CD8-positive, alpha-beta T cell (primary cell): ENCODE measurements at regions of chr2 and their contacts with region 1.

Region 1: DNA sequence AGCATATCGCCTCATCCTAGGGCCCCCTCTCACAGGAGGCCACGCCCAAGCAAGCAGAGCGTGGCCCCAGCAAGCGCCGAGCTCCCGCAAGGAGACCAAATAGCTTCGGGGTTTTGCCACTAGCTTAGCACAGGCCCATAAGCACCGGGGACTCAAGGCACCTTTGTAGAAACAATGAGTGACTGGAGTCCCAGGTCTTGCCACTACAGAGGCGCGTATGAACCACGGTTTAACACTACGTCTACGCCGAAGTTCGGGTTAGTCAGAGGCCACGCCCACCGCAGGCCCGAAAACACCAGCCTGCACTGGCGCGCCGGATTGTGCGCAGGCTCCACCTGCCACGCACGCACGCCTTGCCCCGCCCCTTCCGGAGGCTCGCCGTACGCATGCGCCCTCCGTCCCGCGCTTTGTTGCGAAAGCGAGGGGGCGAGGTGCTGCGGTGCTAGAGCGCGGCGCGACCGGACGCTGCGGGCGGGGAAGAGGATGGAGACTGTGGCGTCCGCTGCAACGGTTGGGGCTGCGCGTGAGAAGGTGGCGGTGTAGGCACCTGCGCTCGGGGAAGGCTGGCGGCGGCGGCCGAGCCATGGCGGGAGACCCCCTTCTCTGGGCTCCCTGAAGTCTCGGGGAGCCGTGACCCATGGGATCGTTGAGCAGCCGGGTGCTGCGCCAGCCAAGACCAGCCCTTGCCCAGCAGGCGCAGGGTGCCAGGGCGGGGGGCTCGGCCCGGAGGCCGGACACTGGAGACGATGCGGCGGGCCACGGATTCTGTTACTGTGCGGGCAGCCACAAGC is at the start of gene GMCL1:
- DNase-seq: peak; percentile 96 to 100 (median 99)
- ATAC-seq: peak; percentile 94
- H3K4me3 ChIP-seq: peak within 1 kb of the TSS; percentile 70 to 75
- H3K4me3 Mint-ChIP-seq: peak within 1 kb of the TSS; percentile 96
- H3K27ac ChIP-seq: peak within 1 kb of the TSS; percentile 89 to 95
- H3K27ac Mint-ChIP-seq: peak within 1 kb of the TSS; percentile 96
- H3K4me1 ChIP-seq: peaks cover 36% of the 10 kb centered on the region
- H3K4me1 Mint-ChIP-seq: peaks cover 54% of the 10 kb centered on the region
- H3K27me3 ChIP-seq: no peaks in the 10 kb centered on the region
- H3K27me3 Mint-ChIP-seq: no peaks in the 10 kb centered on the region
- CTCF ChIP-seq: no peak
- total RNA-seq, gene GMCL1: 37.1 to 41.4 TPM

Region 2: GRCh38 chr2:69386789-69387734 is 442.4 kb before region 1 on chr2 and contains the start of gene GFPT1:
- CTCF ChIA-PET with region 1: no interaction called
- POLR2A ChIA-PET with region 1: no interaction called
- intact Hi-C with region 1: loop called (anchors 1 to 5 kb)
- DNase-seq: peak; percentile 84 to 97 (median 93)
- ATAC-seq: peak; percentile 98
- H3K4me3 ChIP-seq: peak within 1 kb of the TSS; percentile 64 to 68
- H3K4me3 Mint-ChIP-seq: peak within 1 kb of the TSS; percentile 88
- H3K27ac ChIP-seq: peak within 1 kb of the TSS; percentile 65 to 70
- H3K27ac Mint-ChIP-seq: peak within 1 kb of the TSS; percentile 84
- H3K4me1 ChIP-seq: peaks cover 17% of the 10 kb centered on the region
- H3K4me1 Mint-ChIP-seq: peaks cover 45% of the 10 kb centered on the region
- H3K27me3 ChIP-seq: no peaks in the 10 kb centered on the region
- H3K27me3 Mint-ChIP-seq: no peaks in the 10 kb centered on the region
- CTCF ChIP-seq: no peak
- total RNA-seq, gene GFPT1: 26.5 to 30.9 TPM

Region 3: DNA sequence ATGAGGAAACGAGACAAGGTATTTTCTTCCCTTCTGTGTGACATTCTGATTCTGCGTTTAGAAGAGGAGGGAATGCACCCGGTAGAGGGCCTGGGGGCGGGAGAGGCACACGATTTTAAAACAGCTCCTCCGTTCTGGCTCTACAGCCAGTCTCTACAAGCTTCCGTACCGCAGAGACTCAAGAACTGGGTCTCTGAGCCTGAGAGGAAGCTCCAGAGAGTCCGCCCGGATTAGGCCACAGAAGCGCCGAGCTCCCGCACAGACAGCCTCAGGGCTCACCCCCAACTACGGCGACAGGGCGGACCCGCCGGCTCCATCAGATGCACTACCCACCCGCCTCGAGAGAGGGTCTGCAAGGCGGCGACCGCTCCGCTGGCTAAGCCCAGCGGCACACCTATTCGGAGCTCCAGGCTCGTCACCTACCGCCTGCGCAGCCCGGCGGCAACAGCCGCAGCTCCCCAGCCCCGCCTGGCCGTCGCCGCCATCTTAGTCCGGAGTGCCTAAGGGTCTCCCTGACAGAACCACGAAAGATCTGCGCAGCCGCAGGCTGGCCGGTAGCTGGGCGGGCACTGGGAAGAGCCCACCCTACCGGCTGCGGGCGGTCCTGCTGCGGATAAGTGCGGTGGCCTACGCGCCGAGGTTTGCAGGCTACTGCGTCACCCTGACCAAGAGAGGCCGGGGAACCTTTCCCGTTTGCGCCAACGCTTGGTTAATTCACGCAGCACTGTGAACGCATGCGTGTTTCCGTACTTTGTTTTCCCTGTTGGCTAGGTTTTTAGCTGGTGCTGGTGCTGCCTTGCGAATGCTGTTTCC is 392.3 kb before region 1 on chr2 and contains the start of gene NFU1:
- CTCF ChIA-PET with region 1: no interaction called
- POLR2A ChIA-PET with region 1: interaction called, 5 read pairs
- intact Hi-C with region 1: loop called in 1 of 2 experiments (anchors 2 kb)
- DNase-seq: peak; percentile 78 to 96 (median 90)
- ATAC-seq: peak; percentile 79
- H3K4me3 ChIP-seq: peak within 1 kb of the TSS; percentile 68 to 83
- H3K4me3 Mint-ChIP-seq: peak within 1 kb of the TSS; percentile 98
- H3K27ac ChIP-seq: peak within 1 kb of the TSS; percentile 86 to 95
- H3K27ac Mint-ChIP-seq: peak within 1 kb of the TSS; percentile 100
- H3K4me1 ChIP-seq: peaks cover 23% of the 10 kb centered on the region
- H3K4me1 Mint-ChIP-seq: peaks cover 44% of the 10 kb centered on the region
- H3K27me3 ChIP-seq: no peaks in the 10 kb centered on the region
- H3K27me3 Mint-ChIP-seq: no peaks in the 10 kb centered on the region
- CTCF ChIP-seq: peak; percentile 37
- total RNA-seq, gene NFU1: 28.4 to 33.8 TPM

Region 4: DNA sequence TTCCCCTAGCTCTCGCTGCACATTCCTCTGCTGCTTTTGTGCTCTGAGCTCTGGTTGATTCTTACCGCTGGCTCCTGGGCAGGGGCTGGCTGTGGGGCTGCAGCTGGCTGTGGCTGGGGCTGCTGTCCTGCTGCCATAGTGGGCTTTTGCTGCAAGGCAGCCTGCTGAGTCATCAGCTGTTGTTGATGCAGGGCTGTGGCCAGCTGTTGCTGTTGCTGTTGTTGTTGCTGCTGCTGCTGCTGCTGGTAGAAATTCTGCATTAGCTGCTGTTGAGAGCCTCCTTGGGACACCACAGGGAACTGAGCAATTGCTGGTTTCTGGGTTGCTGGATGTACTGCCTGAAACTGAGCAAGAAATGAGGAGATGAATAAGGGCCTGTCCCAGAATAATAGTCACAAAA is 315.0 kb before region 1 on chr2:
- CTCF ChIA-PET with region 1: no interaction called
- POLR2A ChIA-PET with region 1: no interaction called
- intact Hi-C with region 1: no loop called
- DNase-seq: no peak
- ATAC-seq: no peak
- H3K4me3 ChIP-seq: no peak overlapping the region
- H3K4me3 Mint-ChIP-seq: no peak overlapping the region
- H3K27ac ChIP-seq: no peak overlapping the region
- H3K27ac Mint-ChIP-seq: peak overlapping the region; percentile 43
- H3K4me1 ChIP-seq: no peaks in the 10 kb centered on the region
- H3K4me1 Mint-ChIP-seq: peaks cover 4% of the 10 kb centered on the region
- H3K27me3 ChIP-seq: no peaks in the 10 kb centered on the region
- H3K27me3 Mint-ChIP-seq: no peaks in the 10 kb centered on the region
- CTCF ChIP-seq: no peak

Region 5: DNA sequence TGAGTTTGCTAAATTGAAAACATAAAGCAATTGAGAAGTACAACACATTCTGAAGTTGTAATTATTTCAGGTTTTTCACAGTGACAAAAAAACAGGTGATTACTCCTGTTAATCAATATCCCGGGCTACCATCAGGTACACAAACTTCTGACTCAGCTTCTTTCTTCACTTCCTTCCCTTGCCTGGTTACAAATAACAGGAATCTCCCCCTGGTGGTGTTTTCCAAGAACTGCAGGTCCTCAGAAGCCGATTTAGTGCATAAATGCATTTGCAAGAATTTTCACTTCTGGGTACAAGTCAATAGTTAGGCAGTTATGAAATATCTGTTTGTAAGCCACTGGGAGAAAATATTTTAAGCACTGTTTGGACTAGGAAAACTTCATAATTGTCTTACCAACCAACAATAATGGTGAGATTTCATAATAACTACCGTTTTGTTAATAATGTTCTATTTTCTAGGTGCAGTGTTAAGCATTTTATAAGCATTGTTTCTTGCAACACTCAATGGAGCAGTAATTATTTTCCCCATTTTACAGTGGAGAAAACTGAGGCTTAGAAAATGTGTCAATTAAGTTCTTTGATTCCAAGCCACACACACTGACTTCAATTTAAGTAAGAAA is 12.4 kb before region 1 on chr2:
- CTCF ChIA-PET with region 1: interaction called, 28 read pairs
- POLR2A ChIA-PET with region 1: interaction called, 3 read pairs
- intact Hi-C with region 1: no loop called
- DNase-seq: peak; percentile 45 to 88 (median 73)
- ATAC-seq: peak; percentile 96
- H3K4me3 ChIP-seq: no peak overlapping the region
- H3K4me3 Mint-ChIP-seq: no peak overlapping the region
- H3K27ac ChIP-seq: no peak overlapping the region
- H3K27ac Mint-ChIP-seq: no peak overlapping the region
- H3K4me1 ChIP-seq: no peaks in the 10 kb centered on the region
- H3K4me1 Mint-ChIP-seq: peaks cover 3% of the 10 kb centered on the region
- H3K27me3 ChIP-seq: no peaks in the 10 kb centered on the region
- H3K27me3 Mint-ChIP-seq: no peaks in the 10 kb centered on the region
- CTCF ChIP-seq: peak; percentile 94

Region 6: GRCh38 chr2:69893684-69894551 is 64.5 kb after region 1 on chr2 and contains the start of gene SNRNP27:
- CTCF ChIA-PET with region 1: no interaction called
- POLR2A ChIA-PET with region 1: no interaction called
- intact Hi-C with region 1: loop called (anchors 2 kb)
- DNase-seq: peak; percentile 71 to 89 (median 83)
- ATAC-seq: peak; percentile 92
- H3K4me3 ChIP-seq: peak within 1 kb of the TSS; percentile 85 to 88
- H3K4me3 Mint-ChIP-seq: peak within 1 kb of the TSS; percentile 99
- H3K27ac ChIP-seq: peak within 1 kb of the TSS; percentile 82 to 86
- H3K27ac Mint-ChIP-seq: peak within 1 kb of the TSS; percentile 99
- H3K4me1 ChIP-seq: peaks cover 13% of the 10 kb centered on the region
- H3K4me1 Mint-ChIP-seq: peaks cover 46% of the 10 kb centered on the region
- H3K27me3 ChIP-seq: no peaks in the 10 kb centered on the region
- H3K27me3 Mint-ChIP-seq: no peaks in the 10 kb centered on the region
- CTCF ChIP-seq: no peak
- total RNA-seq, gene SNRNP27: 47.9 to 58.5 TPM